K562 (cell line): ENCODE measurements at regions of chr11 and their contacts with region 1.

Region 1: DNA sequence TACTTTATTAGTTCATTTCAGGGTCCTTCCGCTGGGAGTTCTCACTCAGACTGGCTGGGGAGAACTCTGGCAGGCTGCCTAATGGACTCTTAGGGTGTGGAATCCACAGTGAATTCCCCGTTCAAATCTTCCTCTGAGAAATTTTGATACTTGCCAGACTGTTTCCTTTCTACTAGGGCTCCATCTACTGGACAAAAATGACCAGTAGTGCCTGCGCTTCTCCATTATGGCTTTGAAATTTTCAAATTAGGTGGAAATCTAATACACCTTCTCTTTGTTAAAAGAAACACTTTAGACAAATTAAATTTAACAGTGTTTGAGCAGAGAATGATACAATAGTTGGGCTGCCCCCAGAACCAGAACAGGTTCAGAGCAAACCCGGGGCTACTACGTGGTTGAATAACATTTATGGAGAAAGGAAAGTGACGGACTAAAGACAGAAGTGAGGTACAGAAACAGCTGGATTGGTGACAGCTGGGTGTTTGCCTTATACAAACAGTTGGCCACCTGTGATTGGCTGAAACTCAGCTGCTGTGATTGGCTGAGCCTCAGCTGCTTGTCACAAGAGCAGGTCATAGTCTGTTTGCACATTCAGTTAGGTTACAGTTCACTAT is 52.9 kb upstream of the FDX1 start:
- DNase-seq: peak; percentile 52 to 75 (median 54)
- ATAC-seq: peak; percentile 88
- H3K4me3 ChIP-seq: no peak overlapping the region
- H3K27ac ChIP-seq: no peak overlapping the region
- H3K4me1 ChIP-seq: peaks cover 0 to 9% of the 10 kb centered on the region in 2 experiments; a peak in 1 of 5 replicates
- H3K27me3 ChIP-seq: no peaks in the 10 kb centered on the region
- CTCF ChIP-seq: peak; percentile 69 to 83 (median 71); a peak in 5 of 6 replicates
- EP300 ChIP-seq: no peak
- POLR2A ChIP-seq: no peak
- RAD21 ChIP-seq: peak; percentile 78 to 88

Region 2: DNA sequence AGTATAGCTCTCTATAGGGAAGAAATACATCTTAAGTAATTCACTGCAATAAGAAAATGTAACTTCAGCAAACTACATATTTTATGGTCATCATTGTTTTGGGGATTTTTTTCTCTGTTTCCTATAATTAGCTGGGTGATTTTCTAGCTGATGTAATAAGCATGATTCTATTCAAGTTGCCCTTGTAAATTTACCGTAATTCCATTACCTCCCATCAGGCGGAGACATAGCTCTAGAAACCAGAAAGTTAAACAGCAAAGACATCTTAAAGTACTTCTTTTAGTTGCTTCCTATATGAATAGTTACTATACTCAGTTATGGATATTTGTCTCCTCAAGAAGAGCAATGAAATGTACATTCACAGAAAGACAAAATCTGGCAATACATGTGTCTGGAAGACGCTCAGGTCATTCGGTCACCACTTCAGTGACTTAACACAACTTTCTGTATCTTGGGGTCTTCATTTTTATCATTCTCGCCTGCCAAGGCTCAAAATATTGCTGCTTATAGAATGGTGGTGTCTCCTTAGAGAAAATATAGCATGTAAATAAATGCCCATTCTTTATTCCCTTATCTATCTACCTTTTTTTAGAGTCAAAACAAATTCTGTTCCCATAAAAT is 523.6 kb before region 1 on chr11:
- CTCF ChIA-PET with region 1: interaction called, 3 read pairs
- POLR2A ChIA-PET with region 1: no interaction called
- in situ Hi-C with region 1: no loop called
- intact Hi-C with region 1: loop called (anchors 2 kb)
- DNase-seq: peak; percentile 13 to 60 (median 26)
- ATAC-seq: peak; percentile 85
- H3K4me3 ChIP-seq: no peak overlapping the region
- H3K27ac ChIP-seq: no peak overlapping the region
- H3K4me1 ChIP-seq: peaks cover 0 to 3% of the 10 kb centered on the region in 2 experiments; a peak in 1 of 5 replicates
- H3K27me3 ChIP-seq: no peaks in the 10 kb centered on the region
- CTCF ChIP-seq: peak; percentile 57 to 88 (median 63)
- EP300 ChIP-seq: no peak
- POLR2A ChIP-seq: no peak
- RAD21 ChIP-seq: peak; percentile 91 to 97

Region 3: DNA sequence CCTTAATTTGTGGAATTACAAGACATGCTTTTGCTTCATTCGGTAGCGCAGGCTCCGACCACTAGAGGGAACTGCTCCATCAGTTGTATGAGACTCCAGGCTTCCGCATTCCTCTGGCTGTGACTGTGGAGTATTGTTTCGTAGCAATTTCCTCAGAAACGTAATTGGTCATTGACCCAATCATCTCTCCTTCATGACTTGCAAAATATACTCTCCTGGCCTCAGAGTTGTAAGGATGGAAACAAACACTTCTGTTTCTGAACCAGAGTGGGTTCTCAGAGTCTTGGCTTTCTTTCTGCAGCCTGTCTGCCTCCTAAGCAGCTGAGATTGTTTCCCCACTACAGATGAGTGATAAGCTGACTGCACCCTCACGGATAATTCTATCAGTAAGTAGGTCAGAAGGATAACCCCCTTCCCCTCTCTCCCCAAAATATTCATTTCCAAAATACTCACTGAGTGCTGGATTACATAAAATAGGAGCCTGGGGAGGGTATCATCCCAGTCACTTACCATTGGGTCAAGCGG is 430.4 kb before region 1 on chr11:
- CTCF ChIA-PET with region 1: interaction called, 3 read pairs
- POLR2A ChIA-PET with region 1: no interaction called
- in situ Hi-C with region 1: loop called (anchors 25 kb)
- intact Hi-C with region 1: loop called (anchors 5 kb)
- DNase-seq: peak; percentile 59 to 87 (median 66)
- ATAC-seq: peak; percentile 99
- H3K4me3 ChIP-seq: no peak overlapping the region
- H3K27ac ChIP-seq: peak overlapping the region; percentile 43; the same call in 2 of the 3 replicates
- H3K4me1 ChIP-seq: no peaks in the 10 kb centered on the region; a peak in 1 of 5 replicates
- H3K27me3 ChIP-seq: no peaks in the 10 kb centered on the region
- CTCF ChIP-seq: peak; percentile 80 to 94 (median 90)
- EP300 ChIP-seq: peak; percentile 51
- POLR2A ChIP-seq: no peak
- RAD21 ChIP-seq: peak; percentile 95 to 96

Region 4: GRCh38 chr11:109971184-109971523 is 405.7 kb before region 1 on chr11:
- CTCF ChIA-PET with region 1: no interaction called
- POLR2A ChIA-PET with region 1: no interaction called
- in situ Hi-C with region 1: loop called (anchors 25 kb)
- intact Hi-C with region 1: no loop called
- DNase-seq: no peak
- ATAC-seq: no peak
- H3K4me3 ChIP-seq: no peak overlapping the region
- H3K27ac ChIP-seq: no peak overlapping the region
- H3K4me1 ChIP-seq: no peaks in the 10 kb centered on the region; a peak in 1 of 5 replicates
- H3K27me3 ChIP-seq: no peaks in the 10 kb centered on the region
- CTCF ChIP-seq: no peak
- EP300 ChIP-seq: no peak
- POLR2A ChIP-seq: no peak
- RAD21 ChIP-seq: no peak

Region 5: GRCh38 chr11:110272919-110273318 is 103.9 kb before region 1 on chr11:
- CTCF ChIA-PET with region 1: no interaction called
- POLR2A ChIA-PET with region 1: no interaction called
- in situ Hi-C with region 1: no loop called
- intact Hi-C with region 1: no loop called
- DNase-seq: no peak
- ATAC-seq: no peak; the same call in 2 of the 3 replicates
- H3K4me3 ChIP-seq: no peak overlapping the region
- H3K27ac ChIP-seq: no peak overlapping the region
- H3K4me1 ChIP-seq: no peaks in the 10 kb centered on the region; a peak in 1 of 5 replicates
- H3K27me3 ChIP-seq: no peaks in the 10 kb centered on the region
- CTCF ChIP-seq: no peak
- EP300 ChIP-seq: no peak
- POLR2A ChIP-seq: no peak
- RAD21 ChIP-seq: no peak

Region 6: GRCh38 chr11:110296226-110297075 is 80.4 kb before region 1 on chr11 and contains the start of gene RDX:
- CTCF ChIA-PET with region 1: no interaction called
- POLR2A ChIA-PET with region 1: no interaction called
- in situ Hi-C with region 1: no loop called
- intact Hi-C with region 1: loop called (anchors 5 kb)
- DNase-seq: peak; percentile 86 to 94 (median 94)
- ATAC-seq: peak; percentile 84
- H3K4me3 ChIP-seq: peak within 1 kb of the TSS; percentile 99
- H3K27ac ChIP-seq: peak within 1 kb of the TSS; percentile 96
- H3K4me1 ChIP-seq: peaks cover 13 to 25% of the 10 kb centered on the region in 2 experiments
- H3K27me3 ChIP-seq: no peaks in the 10 kb centered on the region
- CTCF ChIP-seq: peak in 2 of 3 experiments; percentile 10 to 19; a peak in 2 of 6 replicates
- EP300 ChIP-seq: no peak
- POLR2A ChIP-seq: peak; percentile 64
- RAD21 ChIP-seq: 0 out of 4 replicates have a peak, but pooled peaks of 1 of the 2 experiments have one; percentile 6
- polyA plus RNA-seq, gene RDX: 51.4 to 54.0 TPM